ENCODE measurements at regions of chr15 and their contacts with region 1.

Region 1: GRCh38 chr15:39686000-39686613 is 96.5 kb downstream of the FSIP1 start:
- DNase-seq: no peak
- ATAC-seq: peak; percentile 62

Region 2: GRCh38 chr15:39874890-39875549 is 188.9 kb after region 1 on chr15:
- intact Hi-C with region 1: loop called (anchors 10 kb)
- DNase-seq: no peak
- ATAC-seq: no peak

Measured in left ventricle myocardium superior (tissue), 1 donor.